CD14-positive monocyte (primary cell): ENCODE measurements at regions of chr10 and their contacts with region 1.

Region 1: GRCh38 chr10:43407576-43408330 is 1.2 kb downstream of the HNRNPF start:
- DNase-seq: peak; percentile 90 to 91 (median 90)
- H3K4me3 ChIP-seq: peak overlapping the region; percentile 59 to 86 (median 65)
- H3K4me3 Mint-ChIP-seq: peak overlapping the region; percentile 96
- H3K27ac ChIP-seq: peak overlapping the region; percentile 94 to 99
- H3K27ac Mint-ChIP-seq: peak overlapping the region; percentile 99 to 100 (median 100)
- H3K4me1 ChIP-seq: peaks cover 38 to 57% of the 10 kb centered on the region in 2 donors
- H3K4me1 Mint-ChIP-seq: peaks cover 47% of the 10 kb centered on the region
- H3K27me3 ChIP-seq: no peaks in the 10 kb centered on the region
- H3K27me3 Mint-ChIP-seq: peaks cover 0 to 3% (median 1%) of the 10 kb centered on the region in 3 donors
- CTCF ChIP-seq: peak; percentile 64

Region 2: DNA sequence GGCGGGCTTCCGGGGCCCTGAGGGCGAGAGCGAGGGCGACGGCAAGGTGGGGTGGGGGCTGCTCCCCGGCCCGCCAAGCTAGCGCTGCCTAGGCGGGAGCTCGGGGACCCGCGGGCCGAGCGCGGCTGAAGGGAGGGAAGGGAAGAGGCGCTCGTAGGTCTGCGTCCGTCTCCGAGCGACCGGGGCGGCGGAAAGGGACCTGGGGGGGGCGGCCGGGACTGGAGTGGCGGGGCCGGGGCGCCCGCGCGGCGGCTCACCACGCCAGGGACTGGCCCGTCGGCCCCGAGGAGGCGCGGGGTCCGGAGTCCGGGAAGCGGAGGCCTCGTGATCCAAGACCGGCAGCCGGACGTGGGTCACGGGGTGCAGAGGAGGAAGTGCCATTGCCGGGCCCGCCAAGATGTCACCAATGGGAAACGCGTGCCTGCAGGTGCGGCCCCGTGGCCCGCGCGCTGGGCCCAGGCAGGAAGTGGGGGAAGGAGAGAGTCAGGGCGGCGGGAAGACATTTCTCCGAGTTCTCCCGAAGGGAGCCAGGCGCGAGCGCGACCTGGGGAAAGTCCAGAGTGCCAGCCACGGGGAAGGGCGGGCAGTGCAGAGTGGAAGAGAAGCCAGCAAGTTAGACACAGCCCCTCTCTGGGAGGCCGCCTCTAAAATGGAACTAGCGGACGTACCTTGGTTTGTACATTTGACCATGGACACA is 10.7 kb before region 1 on chr10:
- intact Hi-C with region 1: loop called in 1 of 2 experiments (anchors 2 kb)
- DNase-seq: peak; percentile 84 to 92 (median 86)
- H3K4me3 ChIP-seq: peak overlapping the region; percentile 42 to 76 (median 60)
- H3K4me3 Mint-ChIP-seq: peak overlapping the region; percentile 88 to 95
- H3K27ac ChIP-seq: peak overlapping the region; percentile 92 to 99
- H3K27ac Mint-ChIP-seq: peak overlapping the region; percentile 95 to 99 (median 96)
- H3K4me1 ChIP-seq: peaks cover 48 to 81% of the 10 kb centered on the region in 2 donors
- H3K4me1 Mint-ChIP-seq: peaks cover 74% of the 10 kb centered on the region
- H3K27me3 ChIP-seq: no peaks in the 10 kb centered on the region
- H3K27me3 Mint-ChIP-seq: peaks cover 0 to 3% (median 0%) of the 10 kb centered on the region in 3 donors
- CTCF ChIP-seq: no peak